Gastrocnemius medialis (tissue), 4 donors: ENCODE measurements at regions of chr6 and their contacts with region 1.

Region 1: GRCh38 chr6:16277101-16277981 is 39.0 kb downstream of the GMPR start:
- DNase-seq: peak; percentile 94 to 97
- ATAC-seq: peak; percentile 81 to 86
- H3K4me3 ChIP-seq: peak overlapping the region; percentile 35 to 50 (median 38)
- H3K27ac ChIP-seq: peak overlapping the region; percentile 91 to 99 (median 98)
- H3K4me1 ChIP-seq: peaks cover 49 to 59% of the 10 kb centered on the region in 2 donors
- H3K27me3 ChIP-seq: no peaks in the 10 kb centered on the region
- CTCF ChIP-seq: peak in 4 of 5 experiments; percentile 24 to 59 (median 52)
- POLR2A ChIP-seq: peak; percentile 27 to 64

Region 2: DNA sequence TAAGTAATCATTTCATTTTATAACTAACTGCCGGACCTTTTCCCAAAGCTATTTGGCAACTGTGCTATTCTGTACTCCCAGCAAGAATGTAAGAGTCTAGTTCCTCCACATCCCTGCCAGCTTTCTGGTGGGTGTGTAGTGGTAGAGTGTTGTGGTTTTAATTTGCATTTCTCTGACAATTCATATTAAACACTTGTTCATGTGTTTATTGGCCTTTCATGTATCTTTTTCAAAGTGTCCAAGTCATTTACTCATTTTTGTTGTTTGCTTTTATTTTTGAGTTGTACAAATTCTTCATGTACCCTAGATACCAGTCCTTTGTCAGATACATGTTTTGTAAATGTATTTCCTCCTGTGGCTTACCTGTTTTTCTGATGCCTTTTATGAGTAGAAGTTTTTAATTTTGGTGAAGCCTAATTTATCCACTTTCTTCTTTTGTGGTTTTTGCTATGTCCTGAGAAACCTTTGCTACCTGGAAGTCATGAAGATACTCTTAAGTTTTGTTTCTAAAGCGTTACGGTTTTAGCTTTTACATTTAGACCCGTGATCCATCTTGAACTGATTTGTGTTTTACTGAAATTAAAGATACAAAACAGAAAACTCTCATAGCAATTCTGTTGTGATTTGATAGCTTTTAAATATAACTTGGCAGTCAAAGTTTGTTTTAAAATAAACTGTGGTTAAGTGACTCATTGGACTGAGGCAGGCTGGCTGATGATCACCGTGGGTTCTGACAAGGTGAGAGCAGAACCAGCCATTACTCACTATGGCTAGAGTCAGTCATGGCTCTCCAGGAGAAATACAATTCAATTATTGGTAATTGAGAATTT is 140.5 kb before region 1 on chr6:
- in situ Hi-C with region 1: no loop called
- intact Hi-C with region 1: loop called (anchors 5 kb)
- DNase-seq: peak; percentile 63 to 79
- ATAC-seq: peak; percentile 91 to 93
- H3K4me3 ChIP-seq: peak overlapping the region in 3 of 4 donors; percentile 19 to 40 (median 36)
- H3K27ac ChIP-seq: peak overlapping the region; percentile 98 to 100 (median 99)
- H3K4me1 ChIP-seq: peaks cover 98 to 100% of the 10 kb centered on the region in 2 donors
- H3K27me3 ChIP-seq: no peaks in the 10 kb centered on the region
- CTCF ChIP-seq: no peak
- POLR2A ChIP-seq: peak; percentile 21 to 69

Region 3: GRCh38 chr6:16238057-16238962 is 39.0 kb before region 1 on chr6 and contains the start of gene GMPR:
- in situ Hi-C with region 1: loop called in 1 of 4 experiments (anchors 5 kb)
- intact Hi-C with region 1: loop called (anchors 1 kb)
- DNase-seq: peak; percentile 81 to 91
- ATAC-seq: peak; percentile 28 to 39
- H3K4me3 ChIP-seq: peak within 1 kb of the TSS; percentile 71 to 88 (median 81)
- H3K27ac ChIP-seq: peak within 1 kb of the TSS; percentile 97 to 99 (median 98)
- H3K4me1 ChIP-seq: peaks cover 46 to 49% of the 10 kb centered on the region in 2 donors
- H3K27me3 ChIP-seq: no peaks in the 10 kb centered on the region
- CTCF ChIP-seq: peak in 2 of 5 experiments; percentile 22 to 32
- POLR2A ChIP-seq: peak; percentile 79 to 87
- total RNA-seq, gene GMPR: 109 to 266 (median 239) TPM

Region 4: DNA sequence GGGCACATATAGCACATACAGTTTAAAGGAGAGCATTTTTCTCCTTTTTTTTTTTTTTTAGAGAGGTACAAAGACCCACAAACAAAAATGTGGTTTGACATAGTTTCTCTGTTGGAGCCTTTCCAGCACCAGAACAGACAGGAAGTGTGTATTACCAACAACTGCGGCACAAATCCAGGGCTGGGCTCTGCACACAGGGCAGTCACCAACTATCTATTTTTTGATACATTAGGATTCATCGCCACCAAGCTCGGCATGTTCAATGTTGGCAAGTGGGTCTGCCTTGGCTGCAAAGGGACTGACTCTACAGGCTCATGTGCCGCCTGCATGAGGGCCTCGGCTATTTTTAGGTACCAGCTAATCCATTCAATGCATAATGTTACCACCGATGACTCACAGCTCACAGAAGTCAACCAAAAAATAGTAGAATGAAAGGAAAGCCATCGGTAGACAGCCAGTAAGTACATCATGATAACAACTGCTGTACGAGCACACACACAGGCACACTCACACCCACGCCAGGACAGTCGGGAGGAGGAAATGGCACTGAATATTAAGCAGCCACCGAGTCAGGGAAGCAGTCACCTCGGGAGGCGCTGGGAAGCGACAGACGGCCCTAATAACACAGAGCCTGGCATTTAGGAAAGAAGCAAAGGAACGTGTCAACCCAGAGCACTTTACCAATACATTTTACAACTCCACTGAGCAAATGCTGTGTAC is 42.6 kb after region 1 on chr6:
- in situ Hi-C with region 1: no loop called
- intact Hi-C with region 1: loop called (anchors 2 kb)
- DNase-seq: peak; percentile 92 to 96
- ATAC-seq: peak; percentile 73 to 74
- H3K4me3 ChIP-seq: peak overlapping the region; percentile 36 to 55 (median 50)
- H3K27ac ChIP-seq: peak overlapping the region; percentile 93 to 100 (median 96)
- H3K4me1 ChIP-seq: peaks cover 69 to 84% of the 10 kb centered on the region in 2 donors
- H3K27me3 ChIP-seq: no peaks in the 10 kb centered on the region
- CTCF ChIP-seq: no peak
- POLR2A ChIP-seq: peak in 1 of 2 donors; percentile 61